ENCODE measurements at regions of chr9 and their contacts with region 1.

Region 1: GRCh38 chr9:128322404-128323211 is at the starts of genes COQ4 and TRUB2:
- DNase-seq: peak; percentile 95
- H3K4me3 Mint-ChIP-seq: peak within 1 kb of the TSS; percentile 85
- H3K27ac Mint-ChIP-seq: peak within 1 kb of the TSS; percentile 94
- H3K4me1 Mint-ChIP-seq: peaks cover 17% of the 10 kb centered on the region
- H3K27me3 Mint-ChIP-seq: no peaks in the 10 kb centered on the region
- total RNA-seq, gene COQ4: 33.0 to 35.5 TPM
- total RNA-seq, gene TRUB2: 27.2 to 27.4 TPM

Region 2: DNA sequence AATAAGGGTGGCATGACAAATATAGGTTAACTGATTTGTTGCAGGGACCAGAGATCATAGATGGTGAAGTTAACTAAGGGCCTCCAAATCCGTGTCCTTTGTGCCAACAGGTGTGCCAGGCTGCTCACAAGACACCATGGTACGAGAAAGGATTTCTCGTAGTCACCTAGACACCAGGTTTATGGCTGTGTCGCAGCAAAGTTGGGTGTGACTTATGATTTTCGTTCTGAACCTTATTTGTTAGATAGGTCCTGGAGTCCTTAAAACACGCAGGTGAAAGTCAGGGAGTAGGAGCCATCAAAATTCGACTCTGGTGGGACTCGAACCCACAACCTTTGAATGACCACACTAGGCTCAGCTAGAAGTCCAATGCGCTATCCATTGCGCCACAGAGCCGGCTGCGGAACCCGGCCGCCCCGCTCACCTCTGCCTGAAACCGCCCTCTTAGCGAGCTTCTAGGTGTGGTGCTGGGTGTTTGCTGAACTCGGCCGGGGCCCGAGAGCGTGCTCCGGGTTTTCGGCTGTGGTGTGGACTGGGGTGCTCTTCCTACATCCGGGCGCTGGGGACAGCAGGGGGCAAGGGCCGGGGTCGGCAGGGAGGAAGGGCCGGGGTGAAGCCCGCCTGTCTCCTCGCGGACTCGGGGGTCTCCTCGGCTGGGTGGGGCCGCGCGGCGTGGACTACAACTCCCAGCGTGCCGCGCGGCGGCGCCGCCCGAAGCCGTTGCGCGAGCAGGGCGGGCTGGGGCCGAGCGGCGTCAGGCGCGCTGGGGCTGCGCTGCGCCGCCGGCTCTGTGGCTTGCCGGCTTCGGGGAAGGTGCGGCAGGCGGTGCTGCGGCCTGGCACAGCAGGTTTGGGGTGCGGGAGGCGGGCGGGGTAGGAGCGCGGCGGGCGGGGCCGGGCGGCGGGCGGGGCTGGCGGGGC is 17.4 kb after region 1 on chr9 and contains the start of gene SLC27A4:
- CTCF ChIA-PET with region 1: interaction called, 8 read pairs
- POLR2A ChIA-PET with region 1: interaction called, 3 read pairs
- intact Hi-C with region 1: loop called (anchors 1 kb)
- DNase-seq: peak; percentile 84
- H3K4me3 Mint-ChIP-seq: peak within 1 kb of the TSS; percentile 90
- H3K27ac Mint-ChIP-seq: peak within 1 kb of the TSS; percentile 76
- H3K4me1 Mint-ChIP-seq: peaks cover 5% of the 10 kb centered on the region
- H3K27me3 Mint-ChIP-seq: no peaks in the 10 kb centered on the region
- total RNA-seq, gene SLC27A4: 12.6 to 14.1 TPM

Measured in activated CD4-positive, alpha-beta memory T cell treated with anti-CD3 and anti-CD28 coated beads for 36 hours (primary cell).